K562 (cell line): ENCODE measurements at regions of chr3 and their contacts with region 1.

Region 1: GRCh38 chr3:143001369-143002082 is at the start of gene U2SURP:
- DNase-seq: peak; percentile 88 to 98 (median 90)
- ATAC-seq: peak; percentile 74
- H3K4me3 ChIP-seq: peak within 1 kb of the TSS; percentile 94
- H3K27ac ChIP-seq: peak within 1 kb of the TSS; percentile 99
- H3K4me1 ChIP-seq: peaks cover 6 to 28% of the 10 kb centered on the region in 2 experiments; a peak in 4 of 5 replicates
- H3K27me3 ChIP-seq: no peaks in the 10 kb centered on the region
- CTCF ChIP-seq: 0 out of 6 replicates have a peak, but pooled peaks of 1 of the 3 experiments have one; percentile 14
- EP300 ChIP-seq: peak; percentile 75
- POLR2A ChIP-seq: peak; percentile 88
- RAD21 ChIP-seq: no peak
- polyA plus RNA-seq, gene U2SURP: 191 to 322 TPM

Region 2: DNA sequence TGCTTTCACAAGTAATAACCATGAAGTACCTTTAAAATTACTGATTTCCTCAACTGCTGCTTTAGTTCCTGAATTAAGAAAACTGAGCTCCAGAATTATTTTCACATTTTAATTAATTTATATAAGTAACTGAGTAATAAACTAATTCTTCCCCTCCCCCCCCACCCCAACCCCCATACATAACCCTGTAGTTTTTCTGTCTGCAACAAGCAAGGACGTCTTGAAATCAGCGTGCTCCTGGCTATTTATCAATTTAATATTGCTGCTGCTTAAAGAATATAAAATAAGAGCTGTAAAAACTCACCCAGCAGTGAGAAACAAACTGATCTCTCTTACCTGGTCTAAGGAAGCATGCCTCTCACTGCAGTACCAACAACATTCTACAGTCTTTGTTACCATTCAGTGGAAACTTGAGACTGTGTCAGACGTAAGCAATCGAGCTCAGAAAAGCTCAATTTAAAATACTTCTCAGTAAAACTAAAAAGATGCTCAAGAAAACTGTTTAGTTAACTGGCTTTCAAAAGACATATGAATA is 973.2 kb before region 1 on chr3:
- CTCF ChIA-PET with region 1: no interaction called
- POLR2A ChIA-PET with region 1: no interaction called
- in situ Hi-C with region 1: no loop called
- intact Hi-C with region 1: loop called (anchors 5 kb)
- DNase-seq: peak; percentile 51 to 90 (median 62)
- ATAC-seq: peak; percentile 81
- H3K4me3 ChIP-seq: peak overlapping the region; percentile 61
- H3K27ac ChIP-seq: peak overlapping the region; percentile 82
- H3K4me1 ChIP-seq: peaks cover 5 to 6% of the 10 kb centered on the region in 2 experiments; a peak in 3 of 5 replicates
- H3K27me3 ChIP-seq: no peaks in the 10 kb centered on the region
- CTCF ChIP-seq: no peak
- EP300 ChIP-seq: peak; percentile 36; the same call in 1 of the 2 replicates
- POLR2A ChIP-seq: peak; percentile 72
- RAD21 ChIP-seq: no peak

Region 3: GRCh38 chr3:142981108-142981507 is 20.4 kb before region 1 on chr3:
- CTCF ChIA-PET with region 1: no interaction called
- POLR2A ChIA-PET with region 1: interaction called, 12 read pairs
- in situ Hi-C with region 1: no loop called
- intact Hi-C with region 1: no loop called
- DNase-seq: peak in 1 of 4 experiments; percentile 43
- ATAC-seq: 0 out of 3 replicates have a peak, but pooled peaks have one; percentile 8
- H3K4me3 ChIP-seq: no peak overlapping the region
- H3K27ac ChIP-seq: no peak overlapping the region
- H3K4me1 ChIP-seq: peaks cover 3 to 38% of the 10 kb centered on the region in 2 experiments; a peak in 3 of 5 replicates
- H3K27me3 ChIP-seq: no peaks in the 10 kb centered on the region
- CTCF ChIP-seq: peak in 1 of 3 experiments; percentile 30; a peak in 1 of 6 replicates
- EP300 ChIP-seq: no peak
- POLR2A ChIP-seq: no peak
- RAD21 ChIP-seq: peak; percentile 10 to 23; a peak in 2 of 4 replicates

Region 4: GRCh38 chr3:143011705-143012104 is 10.2 kb after region 1 on chr3:
- CTCF ChIA-PET with region 1: no interaction called
- POLR2A ChIA-PET with region 1: interaction called, 17 read pairs
- in situ Hi-C with region 1: no loop called
- intact Hi-C with region 1: no loop called
- DNase-seq: no peak
- ATAC-seq: no peak
- H3K4me3 ChIP-seq: no peak overlapping the region
- H3K27ac ChIP-seq: no peak overlapping the region
- H3K4me1 ChIP-seq: peaks cover 5 to 9% of the 10 kb centered on the region in 2 experiments; a peak in 3 of 5 replicates
- H3K27me3 ChIP-seq: no peaks in the 10 kb centered on the region
- CTCF ChIP-seq: no peak
- EP300 ChIP-seq: no peak
- POLR2A ChIP-seq: no peak
- RAD21 ChIP-seq: no peak

Region 5: GRCh38 chr3:143119009-143119914 is 117.7 kb after region 1 on chr3 and contains the start of gene CHST2:
- CTCF ChIA-PET with region 1: no interaction called
- POLR2A ChIA-PET with region 1: interaction called, 4 read pairs
- in situ Hi-C with region 1: no loop called
- intact Hi-C with region 1: loop called (anchors 1 kb)
- DNase-seq: peak; percentile 89 to 97 (median 95)
- ATAC-seq: peak; percentile 89
- H3K4me3 ChIP-seq: peak within 1 kb of the TSS; percentile 89
- H3K27ac ChIP-seq: peak within 1 kb of the TSS; percentile 99
- H3K4me1 ChIP-seq: peaks cover 32 to 34% of the 10 kb centered on the region in 2 experiments; a peak in 4 of 5 replicates
- H3K27me3 ChIP-seq: no peaks in the 10 kb centered on the region
- CTCF ChIP-seq: no peak
- EP300 ChIP-seq: peak; percentile 61; the same call in 1 of the 2 replicates
- POLR2A ChIP-seq: peak; percentile 91
- RAD21 ChIP-seq: peak in 1 of 2 experiments; percentile 16; a peak in 2 of 4 replicates
- polyA plus RNA-seq, gene CHST2: 3.4 to 3.7 TPM